Activated T-helper 2 cell treated with anti-CD3 and anti-CD28 coated beads, Interferon-gamma antibody, Interleukin-2, Interleukin-4, amounts not matched to agents 10 μg/mL and 5 μg/mL and 100 μg/mL, durations not matched to agents 14 hours and 24 hours and 36 hours (primary cell): ENCODE measurements at regions of chr1 and their contacts with region 1.

Region 1: DNA sequence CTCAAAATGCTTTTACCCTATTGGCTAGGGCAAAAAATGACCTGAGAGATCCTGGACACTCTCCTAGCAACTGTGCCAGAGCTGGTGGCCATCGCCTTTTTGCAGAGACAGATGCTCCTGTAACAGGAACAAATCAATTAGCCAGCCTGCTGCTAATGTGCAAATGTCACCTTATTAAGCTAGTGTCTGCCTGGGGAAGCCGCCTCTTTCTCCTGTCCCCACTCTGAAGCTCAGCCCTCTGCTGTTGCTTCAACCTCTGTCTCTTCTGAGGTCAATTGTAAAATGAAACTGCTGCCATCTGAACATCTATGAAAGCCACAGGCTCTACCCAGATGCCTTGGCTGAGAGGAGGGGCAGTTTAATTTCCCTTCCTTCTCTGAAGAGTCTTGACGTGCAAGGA is 85.5 kb upstream of the CACNA1E start:
- DNase-seq: peak; percentile 40
- H3K4me3 Mint-ChIP-seq: peak overlapping the region; percentile 55
- H3K27ac Mint-ChIP-seq: peak overlapping the region; percentile 80
- H3K4me1 Mint-ChIP-seq: peaks cover 35% of the 10 kb centered on the region
- H3K27me3 Mint-ChIP-seq: no peaks in the 10 kb centered on the region

Region 2: GRCh38 chr1:181021811-181022434 is 375.9 kb before region 1 on chr1:
- intact Hi-C with region 1: loop called (anchors 5 kb)
- DNase-seq: peak; percentile 41
- H3K4me3 Mint-ChIP-seq: peak overlapping the region; percentile 87
- H3K27ac Mint-ChIP-seq: peak overlapping the region; percentile 95
- H3K4me1 Mint-ChIP-seq: peaks cover 37% of the 10 kb centered on the region
- H3K27me3 Mint-ChIP-seq: peaks cover 17% of the 10 kb centered on the region

Region 3: GRCh38 chr1:181314959-181315358 is 82.9 kb before region 1 on chr1:
- intact Hi-C with region 1: no loop called
- DNase-seq: no peak
- H3K4me3 Mint-ChIP-seq: no peak overlapping the region
- H3K27ac Mint-ChIP-seq: no peak overlapping the region
- H3K4me1 Mint-ChIP-seq: peaks cover 9% of the 10 kb centered on the region
- H3K27me3 Mint-ChIP-seq: peaks cover 63% of the 10 kb centered on the region

Region 4: GRCh38 chr1:181416268-181416860 is 18.5 kb after region 1 on chr1:
- intact Hi-C with region 1: loop called (anchors 1 kb)
- DNase-seq: no peak
- H3K4me3 Mint-ChIP-seq: no peak overlapping the region
- H3K27ac Mint-ChIP-seq: no peak overlapping the region
- H3K4me1 Mint-ChIP-seq: peaks cover 3% of the 10 kb centered on the region
- H3K27me3 Mint-ChIP-seq: no peaks in the 10 kb centered on the region

Region 5: GRCh38 chr1:181443231-181443853 is 45.5 kb after region 1 on chr1:
- intact Hi-C with region 1: loop called (anchors 2 kb)
- DNase-seq: no peak
- H3K4me3 Mint-ChIP-seq: no peak overlapping the region
- H3K27ac Mint-ChIP-seq: no peak overlapping the region
- H3K4me1 Mint-ChIP-seq: peaks cover 16% of the 10 kb centered on the region
- H3K27me3 Mint-ChIP-seq: peaks cover 17% of the 10 kb centered on the region

Region 6: GRCh38 chr1:181459067-181459466 is 61.2 kb after region 1 on chr1:
- intact Hi-C with region 1: no loop called
- DNase-seq: no peak
- H3K4me3 Mint-ChIP-seq: no peak overlapping the region
- H3K27ac Mint-ChIP-seq: no peak overlapping the region
- H3K4me1 Mint-ChIP-seq: no peaks in the 10 kb centered on the region
- H3K27me3 Mint-ChIP-seq: peaks cover 29% of the 10 kb centered on the region

Region 7: DNA sequence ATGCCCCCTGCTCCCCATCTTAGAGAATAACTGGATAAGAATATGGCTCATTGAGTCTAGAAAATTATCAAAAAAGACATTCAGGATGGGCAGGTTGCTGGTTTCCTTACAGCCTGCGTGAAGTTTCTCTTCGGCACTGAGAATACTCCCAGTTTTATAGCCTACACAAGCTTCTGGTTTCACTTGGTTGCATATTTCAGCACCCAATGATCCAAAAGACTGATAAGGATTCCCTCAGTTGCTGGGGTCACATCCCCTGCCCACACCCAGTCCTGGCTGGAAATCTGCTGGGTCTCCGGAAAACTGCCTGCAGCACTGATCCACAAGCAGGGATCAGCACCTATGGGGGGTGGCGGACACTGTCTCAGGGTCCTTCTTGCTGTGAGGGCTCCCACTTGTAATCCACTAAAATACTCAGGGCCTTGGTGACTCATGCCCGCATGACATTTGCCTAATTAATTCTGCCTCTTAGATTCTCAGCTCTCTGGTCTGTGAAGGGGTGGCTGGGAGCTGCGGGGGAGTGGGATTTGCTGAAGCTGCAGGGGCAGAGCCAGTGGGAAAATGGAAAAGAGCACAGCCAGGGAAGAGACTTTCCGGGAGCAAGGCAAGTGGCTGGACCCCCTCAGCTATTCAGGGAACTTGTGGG is 521.2 kb after region 1 on chr1:
- intact Hi-C with region 1: no loop called
- DNase-seq: no peak
- H3K4me3 Mint-ChIP-seq: no peak overlapping the region
- H3K27ac Mint-ChIP-seq: no peak overlapping the region
- H3K4me1 Mint-ChIP-seq: no peaks in the 10 kb centered on the region
- H3K27me3 Mint-ChIP-seq: no peaks in the 10 kb centered on the region

Region 8: DNA sequence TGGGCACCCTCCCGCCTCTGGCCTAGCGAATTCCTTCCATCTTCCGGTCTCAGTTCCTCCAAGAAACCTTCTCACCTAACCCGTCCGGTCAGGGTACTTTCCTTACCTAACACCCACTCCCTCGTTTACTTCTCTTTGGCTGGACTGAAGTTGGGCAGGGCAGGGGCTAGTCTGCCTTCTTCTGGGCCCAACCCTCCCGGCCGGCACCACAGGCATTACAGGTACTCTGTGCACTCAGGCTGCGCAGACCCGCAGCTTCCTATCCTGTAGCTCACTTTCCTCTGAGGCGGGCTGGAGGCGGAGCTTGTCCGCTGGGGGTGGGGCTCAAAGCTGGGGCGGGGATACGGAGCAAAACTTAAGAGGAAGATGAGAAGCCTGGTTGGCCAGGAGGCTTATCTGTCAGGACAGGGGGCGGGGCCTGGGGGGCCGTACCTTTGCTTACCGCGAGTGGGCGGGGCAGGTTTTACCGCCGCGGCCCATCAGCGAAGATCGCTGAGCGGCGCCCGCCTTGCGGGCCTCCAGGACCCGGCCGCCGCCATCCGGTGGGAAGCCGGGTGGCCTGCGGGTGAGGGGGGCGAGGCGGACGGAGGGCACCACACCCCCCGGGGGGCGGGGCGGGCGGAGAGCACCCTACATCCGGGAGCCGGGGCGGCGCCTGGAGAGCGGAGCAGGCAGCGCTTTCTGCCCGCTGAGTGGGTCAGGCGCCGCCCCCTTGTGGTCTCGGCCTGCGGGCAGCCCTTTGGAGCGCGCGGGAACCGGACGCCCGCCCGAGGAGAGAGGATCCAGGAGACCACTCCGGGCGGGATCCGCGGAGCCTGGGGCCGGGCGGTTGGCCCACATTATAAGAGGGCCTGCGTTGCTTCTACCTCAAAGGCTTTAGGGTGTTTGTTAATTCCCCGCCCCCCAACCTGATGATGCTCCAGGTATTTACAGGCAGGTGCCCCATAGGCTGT is 631.8 kb after region 1 on chr1:
- intact Hi-C with region 1: loop called (anchors 10 kb)
- DNase-seq: peak; percentile 98
- H3K4me3 Mint-ChIP-seq: peak overlapping the region; percentile 97
- H3K27ac Mint-ChIP-seq: peak overlapping the region; percentile 95
- H3K4me1 Mint-ChIP-seq: peaks cover 14% of the 10 kb centered on the region
- H3K27me3 Mint-ChIP-seq: peaks cover 2% of the 10 kb centered on the region